Mammary epithelial cell (primary cell): ENCODE measurements at regions of chr7 and their contacts with region 1.

Region 1: DNA sequence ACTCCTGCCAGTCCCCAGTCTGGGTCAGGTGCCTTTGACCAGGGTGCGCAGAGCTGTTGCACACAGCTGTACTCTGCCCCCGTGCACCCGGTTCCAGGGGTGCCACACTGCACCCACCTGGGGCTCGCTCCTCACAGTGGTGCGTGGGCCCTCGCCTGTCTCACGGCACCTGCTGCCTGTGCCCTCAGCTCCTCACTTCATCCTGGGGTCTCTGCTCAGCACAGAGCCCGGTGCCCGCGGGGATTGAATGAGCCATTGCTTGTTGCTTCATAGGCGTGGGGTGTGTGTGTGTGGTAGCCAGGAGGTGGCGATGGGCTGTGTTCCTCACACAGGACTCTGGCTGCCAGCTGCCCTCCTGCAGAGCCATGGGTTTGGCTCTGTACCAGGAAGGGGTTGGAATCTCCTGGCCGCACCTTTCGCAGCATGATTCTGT is 18.5 kb downstream of the EIF3B start:
- DNase-seq: peak; percentile 24
- H3K4me3 ChIP-seq: no peak overlapping the region
- H3K27ac ChIP-seq: no peak overlapping the region
- H3K4me1 ChIP-seq: peaks cover 7% of the 10 kb centered on the region
- H3K27me3 ChIP-seq: no peaks in the 10 kb centered on the region
- CTCF ChIP-seq: peak in 1 of 2 donors; percentile 13

Region 2: DNA sequence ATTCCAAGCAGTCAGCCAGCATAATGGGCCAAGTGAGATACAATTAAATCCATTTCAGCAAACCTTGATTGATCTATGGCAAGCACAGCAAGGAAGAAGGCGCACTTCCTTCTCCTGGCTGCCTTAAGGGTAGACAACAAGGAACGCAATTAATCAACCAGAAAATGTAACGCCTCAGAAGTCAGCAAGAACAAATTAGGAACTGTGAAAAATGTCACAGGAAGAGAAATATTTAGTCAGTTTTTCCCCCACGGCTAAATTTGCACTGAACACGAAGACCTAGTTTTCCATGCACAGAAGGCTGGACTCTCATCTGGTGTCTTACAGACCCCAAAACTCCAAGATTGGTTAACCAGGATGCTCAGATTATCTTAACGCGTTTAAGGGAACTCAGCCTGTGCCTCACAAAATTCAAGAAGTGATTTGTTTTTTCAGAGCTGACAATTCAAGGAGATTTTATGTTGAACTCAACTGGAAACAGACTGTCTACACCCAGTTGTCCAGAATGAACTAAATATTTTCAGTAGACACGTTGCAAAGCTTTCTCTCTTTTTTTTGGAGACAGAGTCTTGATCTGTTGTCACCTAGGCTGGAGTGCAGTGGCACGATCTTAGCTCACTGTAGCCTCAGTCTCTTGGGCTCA is 73.1 kb before region 1 on chr7:
- CTCF ChIA-PET with region 1: no interaction called
- dilution Hi-C with region 1: loop called (anchors 5 kb)
- in situ Hi-C with region 1: no loop called
- intact Hi-C with region 1: no loop called
- DNase-seq: no peak
- H3K4me3 ChIP-seq: no peak overlapping the region
- H3K27ac ChIP-seq: no peak overlapping the region
- H3K4me1 ChIP-seq: no peaks in the 10 kb centered on the region
- H3K27me3 ChIP-seq: no peaks in the 10 kb centered on the region
- CTCF ChIP-seq: no peak